ENCODE measurements at regions of chr12 and their contacts with region 1.

Region 1: GRCh38 chr12:18250313-18250916 is 10.9 kb upstream of the PIK3C2G start:
- DNase-seq: peak; percentile 52
- H3K4me3 ChIP-seq: no peak overlapping the region
- H3K27ac ChIP-seq: no peak overlapping the region
- H3K4me1 ChIP-seq: no peaks in the 10 kb centered on the region
- H3K27me3 ChIP-seq: no peaks in the 10 kb centered on the region
- CTCF ChIP-seq: peak; percentile 47 to 53
- POLR2A ChIP-seq: no peak

Region 2: DNA sequence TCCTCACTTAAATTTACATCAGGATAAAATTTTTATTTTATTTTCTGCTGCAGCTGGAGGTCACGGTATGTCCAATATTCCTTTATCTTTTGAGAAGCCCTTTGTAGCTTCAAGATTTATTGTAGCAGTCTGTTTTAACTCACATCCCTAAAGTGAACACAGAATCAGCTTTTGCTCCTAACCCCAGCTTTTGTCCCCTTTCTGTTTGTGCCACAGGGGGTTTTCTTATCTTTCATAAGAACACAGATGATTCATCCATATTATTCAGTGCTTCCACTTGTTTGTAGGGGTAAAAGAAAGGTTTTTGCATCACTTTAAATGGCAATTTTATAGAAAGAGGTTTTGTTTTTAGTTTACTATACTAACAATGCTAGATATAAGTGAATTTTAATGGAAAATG is 10.9 kb before region 1 on chr12:
- CTCF ChIA-PET with region 1: interaction called, 22 read pairs
- POLR2A ChIA-PET with region 1: no interaction called
- dilution Hi-C with region 1: no loop called
- intact Hi-C with region 1: no loop called
- DNase-seq: no peak
- H3K4me3 ChIP-seq: no peak overlapping the region
- H3K27ac ChIP-seq: no peak overlapping the region
- H3K4me1 ChIP-seq: no peaks in the 10 kb centered on the region
- H3K27me3 ChIP-seq: no peaks in the 10 kb centered on the region
- CTCF ChIP-seq: no peak
- POLR2A ChIP-seq: no peak

Region 3: GRCh38 chr12:18261253-18261652 is 10.8 kb after region 1 on chr12 and contains the start of gene PIK3C2G:
- CTCF ChIA-PET with region 1: interaction called, 59 read pairs
- POLR2A ChIA-PET with region 1: no interaction called
- dilution Hi-C with region 1: no loop called
- intact Hi-C with region 1: no loop called
- DNase-seq: no peak
- H3K4me3 ChIP-seq: no peak within 1 kb of the TSS
- H3K27ac ChIP-seq: no peak within 1 kb of the TSS
- H3K4me1 ChIP-seq: no peaks in the 10 kb centered on the region
- H3K27me3 ChIP-seq: no peaks in the 10 kb centered on the region
- CTCF ChIP-seq: no peak
- POLR2A ChIP-seq: no peak
- total RNA-seq, gene PIK3C2G: not detected in 2 replicates

Region 4: GRCh38 chr12:18492372-18493025 is 242.1 kb after region 1 on chr12:
- CTCF ChIA-PET with region 1: no interaction called
- POLR2A ChIA-PET with region 1: no interaction called
- dilution Hi-C with region 1: no loop called
- intact Hi-C with region 1: no loop called
- DNase-seq: no peak
- H3K4me3 ChIP-seq: no peak overlapping the region
- H3K27ac ChIP-seq: no peak overlapping the region
- H3K4me1 ChIP-seq: no peaks in the 10 kb centered on the region
- H3K27me3 ChIP-seq: no peaks in the 10 kb centered on the region
- CTCF ChIP-seq: no peak
- POLR2A ChIP-seq: no peak

Measured in endothelial cell of umbilical vein (primary cell).